CD8-positive, alpha-beta T cell (primary cell): ENCODE measurements at regions of chr2 and their contacts with region 1.

Region 1: GRCh38 chr2:197191177-197191939 is 119.2 kb downstream of the ANKRD44 start:
- DNase-seq: peak in 2 of 9 experiments; percentile 77 to 86
- ATAC-seq: peak; percentile 52
- H3K4me3 ChIP-seq: no peak overlapping the region
- H3K4me3 Mint-ChIP-seq: peak overlapping the region; percentile 10
- H3K27ac ChIP-seq: peak overlapping the region; percentile 16 to 72
- H3K27ac Mint-ChIP-seq: peak overlapping the region; percentile 82
- H3K4me1 ChIP-seq: peaks cover 84% of the 10 kb centered on the region
- H3K4me1 Mint-ChIP-seq: peaks cover 88% of the 10 kb centered on the region
- H3K27me3 ChIP-seq: no peaks in the 10 kb centered on the region
- H3K27me3 Mint-ChIP-seq: no peaks in the 10 kb centered on the region
- CTCF ChIP-seq: peak; percentile 83

Region 2: GRCh38 chr2:197011799-197012641 is 179.3 kb before region 1 on chr2:
- CTCF ChIA-PET with region 1: no interaction called
- POLR2A ChIA-PET with region 1: no interaction called
- intact Hi-C with region 1: loop called in 1 of 2 experiments (anchors 2 kb)
- DNase-seq: peak in 3 of 9 experiments; percentile 14 to 69 (median 57)
- ATAC-seq: peak; percentile 59
- H3K4me3 ChIP-seq: no peak overlapping the region
- H3K4me3 Mint-ChIP-seq: no peak overlapping the region
- H3K27ac ChIP-seq: no peak overlapping the region
- H3K27ac Mint-ChIP-seq: peak overlapping the region; percentile 46
- H3K4me1 ChIP-seq: no peaks in the 10 kb centered on the region
- H3K4me1 Mint-ChIP-seq: peaks cover 6% of the 10 kb centered on the region
- H3K27me3 ChIP-seq: no peaks in the 10 kb centered on the region
- H3K27me3 Mint-ChIP-seq: no peaks in the 10 kb centered on the region
- CTCF ChIP-seq: peak; percentile 78

Region 3: GRCh38 chr2:197179744-197180498 is 11.4 kb before region 1 on chr2:
- CTCF ChIA-PET with region 1: interaction called, 17 read pairs
- POLR2A ChIA-PET with region 1: no interaction called
- intact Hi-C with region 1: no loop called
- DNase-seq: no peak
- ATAC-seq: no peak
- H3K4me3 ChIP-seq: no peak overlapping the region
- H3K4me3 Mint-ChIP-seq: no peak overlapping the region
- H3K27ac ChIP-seq: no peak overlapping the region
- H3K27ac Mint-ChIP-seq: peak overlapping the region; percentile 82
- H3K4me1 ChIP-seq: peaks cover 37% of the 10 kb centered on the region
- H3K4me1 Mint-ChIP-seq: peaks cover 83% of the 10 kb centered on the region
- H3K27me3 ChIP-seq: no peaks in the 10 kb centered on the region
- H3K27me3 Mint-ChIP-seq: no peaks in the 10 kb centered on the region
- CTCF ChIP-seq: no peak

Region 4: GRCh38 chr2:197239434-197239833 is 48.1 kb after region 1 on chr2:
- CTCF ChIA-PET with region 1: interaction called, 18 read pairs
- POLR2A ChIA-PET with region 1: no interaction called
- intact Hi-C with region 1: no loop called
- DNase-seq: peak in 2 of 9 experiments; percentile 36 to 62
- ATAC-seq: peak; percentile 41
- H3K4me3 ChIP-seq: peak overlapping the region; percentile 38 to 41
- H3K4me3 Mint-ChIP-seq: peak overlapping the region; percentile 84
- H3K27ac ChIP-seq: peak overlapping the region; percentile 39 to 89
- H3K27ac Mint-ChIP-seq: peak overlapping the region; percentile 96
- H3K4me1 ChIP-seq: peaks cover 88% of the 10 kb centered on the region
- H3K4me1 Mint-ChIP-seq: peaks cover 87% of the 10 kb centered on the region
- H3K27me3 ChIP-seq: no peaks in the 10 kb centered on the region
- H3K27me3 Mint-ChIP-seq: no peaks in the 10 kb centered on the region
- CTCF ChIP-seq: no peak

Region 5: GRCh38 chr2:197304556-197305011 is 113.2 kb after region 1 on chr2:
- CTCF ChIA-PET with region 1: interaction called, 89 read pairs
- POLR2A ChIA-PET with region 1: interaction called, 288 read pairs
- intact Hi-C with region 1: no loop called
- DNase-seq: peak in 2 of 9 experiments; percentile 33 to 50
- ATAC-seq: peak; percentile 18
- H3K4me3 ChIP-seq: peak overlapping the region; percentile 15 to 24
- H3K4me3 Mint-ChIP-seq: peak overlapping the region; percentile 92
- H3K27ac ChIP-seq: peak overlapping the region; percentile 20 to 88
- H3K27ac Mint-ChIP-seq: peak overlapping the region; percentile 94
- H3K4me1 ChIP-seq: peaks cover 86% of the 10 kb centered on the region
- H3K4me1 Mint-ChIP-seq: peaks cover 89% of the 10 kb centered on the region
- H3K27me3 ChIP-seq: no peaks in the 10 kb centered on the region
- H3K27me3 Mint-ChIP-seq: no peaks in the 10 kb centered on the region
- CTCF ChIP-seq: no peak

Region 6: GRCh38 chr2:197378494-197379307 is 187.3 kb after region 1 on chr2:
- CTCF ChIA-PET with region 1: interaction called, 25 read pairs
- POLR2A ChIA-PET with region 1: no interaction called
- intact Hi-C with region 1: loop called (anchors 1 kb)
- DNase-seq: peak; percentile 24 to 78 (median 62)
- ATAC-seq: peak; percentile 57
- H3K4me3 ChIP-seq: no peak overlapping the region
- H3K4me3 Mint-ChIP-seq: no peak overlapping the region
- H3K27ac ChIP-seq: no peak overlapping the region
- H3K27ac Mint-ChIP-seq: no peak overlapping the region
- H3K4me1 ChIP-seq: peaks cover 7% of the 10 kb centered on the region
- H3K4me1 Mint-ChIP-seq: peaks cover 12% of the 10 kb centered on the region
- H3K27me3 ChIP-seq: no peaks in the 10 kb centered on the region
- H3K27me3 Mint-ChIP-seq: no peaks in the 10 kb centered on the region
- CTCF ChIP-seq: peak; percentile 93

Region 7: GRCh38 chr2:198116756-198117155 is 925.4 kb after region 1 on chr2:
- CTCF ChIA-PET with region 1: no interaction called
- POLR2A ChIA-PET with region 1: no interaction called
- intact Hi-C with region 1: no loop called
- DNase-seq: no peak
- ATAC-seq: no peak
- H3K4me3 ChIP-seq: no peak overlapping the region
- H3K4me3 Mint-ChIP-seq: no peak overlapping the region
- H3K27ac ChIP-seq: no peak overlapping the region
- H3K27ac Mint-ChIP-seq: no peak overlapping the region
- H3K4me1 ChIP-seq: no peaks in the 10 kb centered on the region
- H3K4me1 Mint-ChIP-seq: no peaks in the 10 kb centered on the region
- H3K27me3 ChIP-seq: no peaks in the 10 kb centered on the region
- H3K27me3 Mint-ChIP-seq: no peaks in the 10 kb centered on the region
- CTCF ChIP-seq: no peak